Calu3 (cell line): ENCODE measurements at regions of chr7 and their contacts with region 1.

Region 1: DNA sequence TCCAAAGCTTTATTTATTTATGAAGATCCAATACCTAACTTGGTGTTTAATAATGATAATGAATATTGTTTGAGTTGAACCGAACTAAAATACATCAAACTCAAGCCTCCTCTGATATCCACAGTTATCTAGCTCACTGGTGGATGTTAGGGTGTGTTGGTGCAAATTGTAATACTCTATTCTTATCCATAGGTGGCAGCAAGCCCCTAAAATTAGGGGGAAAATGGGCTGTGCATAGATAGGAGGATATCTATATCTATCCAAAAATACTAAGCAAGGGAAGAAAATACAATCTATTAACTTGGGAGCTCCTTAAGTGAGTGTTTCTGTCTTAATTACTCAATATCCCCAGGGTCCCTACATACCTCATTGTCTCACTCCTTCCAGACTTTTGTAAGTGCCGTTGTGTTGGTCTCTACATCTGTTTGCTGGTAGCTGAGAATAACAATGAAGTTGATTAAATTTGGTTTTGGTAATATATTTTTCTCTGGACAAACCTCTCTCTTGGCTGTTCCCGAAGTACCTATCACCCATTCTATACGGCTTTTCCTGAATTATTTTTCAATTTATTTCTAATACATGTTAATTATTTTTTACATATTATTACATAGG is 55.0 kb upstream of the VWDE start:
- DNase-seq: peak; percentile 49
- H3K4me3 Mint-ChIP-seq: no peak overlapping the region
- H3K27ac Mint-ChIP-seq: no peak overlapping the region
- H3K4me1 Mint-ChIP-seq: no peaks in the 10 kb centered on the region
- H3K27me3 Mint-ChIP-seq: no peaks in the 10 kb centered on the region
- CTCF ChIP-seq: peak; percentile 84

Region 2: DNA sequence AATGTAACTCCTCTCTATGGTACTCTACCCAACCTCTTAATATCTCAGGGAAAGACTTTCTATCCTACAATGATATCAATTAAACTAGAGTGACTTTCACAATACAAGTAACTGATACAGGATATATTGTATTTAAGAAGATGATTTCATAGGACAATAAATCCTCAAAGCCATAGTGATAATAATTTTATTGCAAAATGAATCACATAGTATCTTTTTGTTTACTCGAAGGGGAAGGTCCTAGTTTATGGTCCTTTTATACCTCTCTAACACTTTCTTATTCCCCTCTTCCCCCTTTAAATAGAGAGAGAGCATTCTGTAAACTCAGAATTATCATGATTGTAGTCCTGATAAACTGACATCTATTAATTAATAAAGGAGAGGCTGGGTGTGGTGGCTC is 191.1 kb before region 1 on chr7:
- CTCF ChIA-PET with region 1: no interaction called
- intact Hi-C with region 1: no loop called
- DNase-seq: no peak
- H3K4me3 Mint-ChIP-seq: no peak overlapping the region
- H3K27ac Mint-ChIP-seq: no peak overlapping the region
- H3K4me1 Mint-ChIP-seq: no peaks in the 10 kb centered on the region
- H3K27me3 Mint-ChIP-seq: no peaks in the 10 kb centered on the region
- CTCF ChIP-seq: no peak

Region 3: GRCh38 chr7:12434009-12434642 is 24.5 kb before region 1 on chr7:
- CTCF ChIA-PET with region 1: interaction called, 10 read pairs
- intact Hi-C with region 1: no loop called
- DNase-seq: no peak
- H3K4me3 Mint-ChIP-seq: no peak overlapping the region
- H3K27ac Mint-ChIP-seq: no peak overlapping the region
- H3K4me1 Mint-ChIP-seq: no peaks in the 10 kb centered on the region
- H3K27me3 Mint-ChIP-seq: no peaks in the 10 kb centered on the region
- CTCF ChIP-seq: peak; percentile 61

Region 4: GRCh38 chr7:12444785-12445184 is 13.8 kb before region 1 on chr7:
- CTCF ChIA-PET with region 1: interaction called, 11 read pairs
- intact Hi-C with region 1: no loop called
- DNase-seq: no peak
- H3K4me3 Mint-ChIP-seq: no peak overlapping the region
- H3K27ac Mint-ChIP-seq: no peak overlapping the region
- H3K4me1 Mint-ChIP-seq: no peaks in the 10 kb centered on the region
- H3K27me3 Mint-ChIP-seq: no peaks in the 10 kb centered on the region
- CTCF ChIP-seq: no peak